Right cardiac atrium (tissue), 5 donors: ENCODE measurements at regions of chr10 and their contacts with region 1.

Region 1: DNA sequence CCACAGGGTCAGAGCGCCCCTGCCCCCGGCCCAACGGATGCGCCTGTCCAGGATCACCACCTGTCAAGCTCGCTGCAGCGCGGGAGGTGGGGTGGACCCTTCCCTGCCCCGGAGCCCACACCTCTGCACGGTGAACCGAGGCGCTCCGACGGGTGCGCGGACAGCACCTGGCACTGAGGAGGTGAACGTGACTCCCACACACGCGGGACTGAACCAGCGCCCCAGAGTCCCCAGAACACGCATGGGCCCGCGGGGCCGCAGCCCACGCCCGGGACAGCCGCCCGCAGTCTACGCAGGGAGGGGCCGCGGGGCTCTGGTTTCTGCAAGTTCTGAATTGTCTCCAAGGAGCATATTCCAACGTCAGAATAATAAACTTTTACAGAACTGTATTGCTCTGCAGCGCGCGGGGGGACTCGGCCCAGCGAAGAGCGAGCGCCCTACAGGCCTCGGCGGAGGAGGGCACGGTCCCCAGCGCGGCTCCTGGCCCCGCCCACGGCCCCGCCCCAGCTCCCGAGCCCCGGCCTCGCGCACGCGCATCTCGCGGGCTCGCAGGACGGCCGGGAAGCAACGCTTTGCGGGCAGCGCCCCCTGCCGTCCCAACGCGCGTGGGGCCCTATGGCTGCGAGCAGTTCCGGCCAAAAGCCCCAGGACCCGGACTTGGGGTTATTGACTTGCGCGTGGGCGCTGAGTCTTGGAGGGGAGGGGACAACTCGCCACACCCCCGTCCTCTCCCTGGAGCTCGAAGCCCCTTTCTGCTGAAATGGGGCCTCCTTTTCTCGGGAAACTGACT is 29.7 kb downstream of the OAT start:
- DNase-seq: peak; percentile 88 to 97 (median 97)
- ATAC-seq: peak; percentile 98 to 99
- H3K4me3 ChIP-seq: peak overlapping the region; percentile 53
- H3K27ac ChIP-seq: no peak overlapping the region
- H3K4me1 ChIP-seq: no peaks in the 10 kb centered on the region
- H3K27me3 ChIP-seq: no peaks in the 10 kb centered on the region

Region 2: DNA sequence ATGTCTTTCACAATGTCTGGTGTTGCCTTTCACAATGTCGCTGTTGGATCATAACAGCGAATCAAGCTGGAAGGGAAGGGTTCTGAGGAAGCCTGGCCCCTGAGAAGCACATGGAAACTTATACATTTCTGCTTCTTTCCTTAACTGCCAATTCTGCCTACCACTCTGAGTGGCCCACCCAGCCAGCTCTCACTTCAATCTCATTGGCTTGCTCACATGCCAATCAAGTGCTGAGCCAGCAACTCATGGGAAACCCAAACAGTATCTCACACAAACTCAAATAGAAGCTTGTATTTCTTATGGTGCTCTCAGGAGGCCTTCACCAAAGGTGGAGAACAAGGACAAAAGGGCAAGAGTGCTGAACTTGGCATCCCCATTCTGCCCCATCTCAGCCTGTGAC is 840.2 kb before region 1 on chr10:
- intact Hi-C with region 1: no loop called
- DNase-seq: no peak
- ATAC-seq: no peak
- H3K4me3 ChIP-seq: no peak overlapping the region
- H3K27ac ChIP-seq: no peak overlapping the region
- H3K4me1 ChIP-seq: no peaks in the 10 kb centered on the region
- H3K27me3 ChIP-seq: no peaks in the 10 kb centered on the region

Region 3: GRCh38 chr10:123573236-123574108 is 815.5 kb before region 1 on chr10:
- intact Hi-C with region 1: loop called in 1 of 4 experiments (anchors 10 kb)
- DNase-seq: no peak
- ATAC-seq: no peak
- H3K4me3 ChIP-seq: no peak overlapping the region
- H3K27ac ChIP-seq: no peak overlapping the region
- H3K4me1 ChIP-seq: no peaks in the 10 kb centered on the region
- H3K27me3 ChIP-seq: no peaks in the 10 kb centered on the region